Left cardiac atrium (tissue), 4 donors: ENCODE measurements at regions of chr14 and their contacts with region 1.

Region 1: DNA sequence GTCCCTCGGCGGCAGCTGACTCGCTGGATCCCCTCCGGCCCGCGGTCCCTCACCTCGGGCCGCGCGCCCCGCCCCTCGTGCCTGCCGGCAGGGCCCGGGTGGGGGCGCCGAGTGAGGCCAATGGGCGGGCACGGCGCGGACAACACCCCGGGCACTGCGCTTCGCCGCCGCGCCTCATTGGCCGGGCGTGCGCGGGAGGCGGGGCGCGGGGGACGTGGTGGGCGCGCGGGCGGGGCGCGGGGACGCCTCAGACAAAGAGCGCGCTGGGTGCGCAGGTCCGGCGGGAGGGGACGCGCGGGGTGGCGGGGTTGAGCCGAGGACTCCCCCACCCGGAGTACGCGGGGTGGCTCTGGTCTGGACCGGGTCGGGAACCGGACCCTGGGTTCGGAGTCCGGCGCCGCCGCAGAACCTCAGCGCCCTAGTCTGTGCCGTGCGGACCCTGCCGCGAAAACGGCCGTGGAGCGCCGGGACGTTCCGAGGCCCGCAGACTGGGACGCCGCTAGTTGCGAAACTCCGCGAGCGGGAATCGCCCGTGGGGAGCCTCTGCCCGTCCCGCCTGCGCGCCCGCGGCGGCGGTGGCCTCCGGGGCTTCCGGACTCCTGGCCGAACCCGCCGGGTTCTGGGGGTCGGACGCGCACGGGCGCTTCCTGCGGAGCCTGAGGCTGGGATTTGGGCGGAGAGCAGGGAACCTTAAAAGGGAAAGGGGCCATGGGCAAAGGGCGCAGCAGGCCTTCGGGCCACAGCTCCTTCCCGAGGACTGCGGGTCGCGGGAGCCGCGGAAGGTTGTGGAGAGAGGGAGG is at the start of gene SLC25A29:
- DNase-seq: peak; percentile 92
- ATAC-seq: peak; percentile 92 to 93
- total RNA-seq, gene SLC25A29: 19.7 to 22.1 TPM

Region 2: DNA sequence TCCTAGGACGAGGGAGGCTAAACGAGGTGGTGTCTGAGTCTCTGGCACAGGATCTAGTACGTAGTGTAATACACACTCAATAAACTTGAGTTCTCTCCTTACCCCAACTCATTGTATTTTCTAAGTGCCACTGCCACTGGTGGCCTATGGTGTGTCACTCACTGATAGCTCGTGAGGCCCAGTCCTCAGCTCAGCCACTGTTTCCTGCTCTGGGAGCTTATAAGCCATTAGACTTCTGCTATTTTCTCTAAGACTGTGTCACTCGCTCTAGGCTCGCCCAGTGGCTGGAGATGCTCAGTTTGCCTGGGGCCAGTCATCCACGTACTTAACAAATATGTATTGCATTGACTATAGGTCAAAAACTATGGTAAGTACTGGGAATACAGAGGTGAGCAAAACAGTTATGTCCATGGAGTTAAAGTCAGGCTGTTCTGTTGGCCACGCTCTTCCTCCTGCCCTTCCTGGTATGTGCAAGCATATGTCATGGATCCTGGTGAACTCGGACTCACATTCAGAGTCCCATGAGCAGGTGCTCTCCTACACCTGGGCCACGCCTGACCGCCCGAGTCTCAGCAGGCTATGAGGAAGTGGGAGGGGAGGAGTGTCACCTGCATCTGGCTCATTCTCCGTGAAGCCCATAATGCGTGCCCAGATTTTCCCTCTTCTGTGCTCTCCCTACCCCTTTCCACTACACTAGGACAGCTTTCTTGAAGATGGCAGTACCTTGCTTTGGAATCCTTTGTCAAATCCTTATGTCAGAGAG is 188.8 kb before region 1 on chr14:
- intact Hi-C with region 1: no loop called
- DNase-seq: no peak
- ATAC-seq: no peak

Region 3: GRCh38 chr14:100375963-100376735 is 69.5 kb after region 1 on chr14:
- intact Hi-C with region 1: loop called (anchors 5 to 10 kb)
- DNase-seq: peak; percentile 96
- ATAC-seq: peak; percentile 95 to 97

Region 4: DNA sequence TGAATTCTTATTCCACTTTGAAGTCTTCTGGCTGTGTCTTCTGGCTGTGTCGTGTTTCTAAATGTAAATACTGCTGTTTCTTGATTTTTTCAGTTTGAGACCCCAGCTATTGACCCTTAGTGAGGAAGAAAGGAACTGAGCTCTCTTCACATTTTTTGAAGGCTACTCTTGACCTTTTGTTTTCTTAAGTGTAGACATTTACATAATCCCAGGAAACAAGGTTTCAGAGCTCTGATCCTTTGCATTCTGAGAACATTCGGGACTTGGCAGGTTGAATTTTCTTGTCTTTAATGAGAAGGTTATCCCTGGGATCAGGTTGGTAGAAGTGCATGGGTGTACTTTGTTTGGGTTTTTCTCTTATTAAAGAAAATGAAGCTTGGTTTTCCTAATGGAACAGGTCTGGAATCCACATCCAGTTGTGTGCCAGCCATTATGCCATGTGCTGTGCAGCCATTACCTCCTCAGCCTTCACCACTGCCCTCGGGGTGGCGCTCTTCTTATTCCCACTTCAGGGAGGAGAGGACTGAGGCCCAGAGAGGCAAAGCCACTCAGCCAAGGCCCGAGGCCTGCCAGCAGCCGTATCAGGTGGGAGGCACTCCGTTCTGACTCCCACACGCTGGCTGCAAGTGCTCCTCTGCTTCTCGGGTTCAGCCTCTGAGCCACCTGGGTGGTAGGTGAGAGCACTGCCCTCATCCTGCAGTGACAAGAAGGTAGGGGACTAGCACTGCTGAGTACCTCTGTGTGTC is 159.7 kb after region 1 on chr14:
- intact Hi-C with region 1: no loop called
- DNase-seq: no peak
- ATAC-seq: no peak